Posterior cingulate gyrus (tissue), 11 donors: ENCODE measurements at regions of chr2 and their contacts with region 1.

Region 1: GRCh38 chr2:86221066-86221684 is 21.9 kb downstream of the MRPL35 start:
- DNase-seq: peak in 7 of 10 donors; percentile 31 to 94 (median 61)

Region 2: DNA sequence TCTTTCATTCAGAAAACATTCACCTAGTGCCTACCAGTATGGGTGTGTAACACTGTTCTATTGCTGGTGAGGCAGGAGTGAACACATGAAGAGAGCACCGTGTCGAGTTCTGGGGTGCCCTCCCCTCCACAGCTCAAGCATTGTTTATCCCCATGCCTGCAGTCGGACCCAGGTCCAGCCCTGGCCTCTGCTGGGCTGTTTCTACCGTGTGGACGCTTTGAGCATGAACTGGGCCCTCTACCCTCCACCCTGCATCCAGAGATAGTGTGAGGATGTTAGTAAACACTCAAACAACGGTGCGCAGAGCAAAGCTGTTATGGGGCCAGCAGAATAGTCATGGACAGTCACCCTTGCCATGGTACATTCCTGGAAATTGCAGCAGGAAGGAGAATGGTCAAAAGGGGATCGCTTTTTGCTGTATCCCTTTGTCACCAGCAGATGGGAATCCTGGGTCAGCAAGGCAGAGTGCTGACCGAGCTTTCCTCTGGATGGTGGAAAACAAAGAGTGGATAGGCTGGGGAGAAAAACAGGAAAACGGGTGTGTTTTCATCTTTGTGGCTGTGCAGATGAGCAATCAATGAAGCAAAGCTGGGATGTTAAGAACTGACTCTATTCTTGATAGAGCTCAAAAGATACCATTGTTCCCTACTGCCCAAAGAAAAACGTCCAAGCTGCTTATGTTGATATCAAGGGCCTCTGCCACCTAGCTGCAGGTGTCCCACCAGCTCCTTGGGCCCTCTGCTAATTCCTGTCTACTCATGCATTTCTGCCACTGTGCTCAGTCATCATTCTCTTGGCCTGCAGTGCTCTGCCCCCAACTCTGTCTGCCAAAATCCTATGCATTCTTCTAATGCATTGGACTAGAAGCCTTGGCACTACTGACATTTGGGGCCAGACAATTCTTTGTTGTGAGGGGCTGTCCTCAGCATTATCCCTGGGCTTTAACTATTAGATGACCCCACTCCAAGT is 77.5 kb after region 1 on chr2:
- intact Hi-C with region 1: loop called (anchors 5 kb)
- DNase-seq: peak in 5 of 10 donors; percentile 35 to 91 (median 41)

Region 3: GRCh38 chr2:86372641-86373503 is 151.7 kb after region 1 on chr2:
- intact Hi-C with region 1: loop called (anchors 5 kb)
- DNase-seq: peak in 2 of 10 donors; percentile 38 to 55